GM12878 (cell line): ENCODE measurements at regions of chr14 and their contacts with region 1.

Region 1: DNA sequence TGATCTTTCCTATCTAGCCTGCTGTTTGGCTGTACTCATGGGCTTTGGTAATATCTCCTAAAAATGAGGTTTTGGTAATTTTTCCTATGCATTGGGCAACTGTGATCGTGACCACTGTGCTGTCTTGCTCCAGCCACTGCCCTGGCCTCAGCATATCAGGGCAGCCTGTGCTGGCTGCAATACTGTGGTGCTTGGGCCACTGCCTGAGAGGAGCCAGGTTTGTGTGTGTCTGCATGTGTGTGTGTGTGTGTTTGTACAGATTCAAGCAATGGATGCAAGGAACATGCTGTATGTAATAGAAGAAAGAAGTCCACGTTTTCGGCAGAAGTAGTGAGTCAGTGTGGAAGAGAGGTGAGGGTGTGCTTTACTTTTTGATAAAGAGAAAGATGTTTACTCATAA is 13.0 kb downstream of the ERG28 start:
- DNase-seq: no peak
- ATAC-seq: no peak
- H3K4me3 ChIP-seq: no peak overlapping the region
- H3K27ac ChIP-seq: no peak overlapping the region
- H3K4me1 ChIP-seq: no peaks in the 10 kb centered on the region
- H3K27me3 ChIP-seq: no peaks in the 10 kb centered on the region
- CTCF ChIP-seq: no peak
- EP300 ChIP-seq: no peak
- POLR2A ChIP-seq: no peak
- RAD21 ChIP-seq: no peak

Region 2: DNA sequence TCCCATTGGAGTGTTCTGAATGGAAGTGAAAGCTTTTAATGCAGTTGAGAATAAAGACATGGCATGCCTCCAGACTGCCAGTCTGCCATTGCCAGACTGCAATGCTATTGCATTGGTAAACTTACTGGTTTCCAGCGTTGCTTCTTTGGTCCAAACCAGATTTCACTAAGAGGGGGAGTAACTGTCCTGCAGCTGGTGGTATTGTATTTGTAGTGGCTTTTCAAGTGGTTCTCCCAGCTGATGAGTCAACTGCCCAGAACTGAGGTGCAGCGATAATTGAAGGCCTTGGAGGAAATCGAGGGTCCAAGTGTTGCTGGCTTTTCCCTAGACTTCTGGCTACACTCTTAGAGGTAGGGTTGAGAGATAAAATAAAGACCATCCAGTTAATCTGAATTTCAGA is 18.8 kb before region 1 on chr14:
- CTCF ChIA-PET with region 1: interaction called, 7 read pairs
- POLR2A ChIA-PET with region 1: no interaction called
- RAD21 ChIA-PET with region 1: no interaction called
- SMC1A ChIA-PET with region 1: interaction called, 13 read pairs
- in situ Hi-C with region 1: no loop called
- intact Hi-C with region 1: no loop called
- DNase-seq: no peak
- ATAC-seq: no peak
- H3K4me3 ChIP-seq: no peak overlapping the region
- H3K27ac ChIP-seq: no peak overlapping the region
- H3K4me1 ChIP-seq: no peaks in the 10 kb centered on the region
- H3K27me3 ChIP-seq: no peaks in the 10 kb centered on the region
- CTCF ChIP-seq: no peak
- EP300 ChIP-seq: no peak
- POLR2A ChIP-seq: no peak
- RAD21 ChIP-seq: no peak

Region 3: GRCh38 chr14:75660630-75661494 is 13.2 kb after region 1 on chr14 and contains the starts of genes ERG28 and TTLL5:
- CTCF ChIA-PET with region 1: interaction called, 8 read pairs
- POLR2A ChIA-PET with region 1: interaction called, 15 read pairs
- RAD21 ChIA-PET with region 1: no interaction called
- SMC1A ChIA-PET with region 1: interaction called, 10 read pairs
- in situ Hi-C with region 1: no loop called
- intact Hi-C with region 1: no loop called
- DNase-seq: peak; percentile 99
- ATAC-seq: peak; percentile 99
- H3K4me3 ChIP-seq: peak within 1 kb of the TSS; percentile 89
- H3K27ac ChIP-seq: peak within 1 kb of the TSS; percentile 49
- H3K4me1 ChIP-seq: no peaks in the 10 kb centered on the region
- H3K27me3 ChIP-seq: no peaks in the 10 kb centered on the region
- CTCF ChIP-seq: no peak
- EP300 ChIP-seq: 0 out of 4 replicates have a peak, but pooled peaks of 1 of the 2 experiments have one; percentile 16
- POLR2A ChIP-seq: peak; percentile 82
- RAD21 ChIP-seq: no peak
- polyA plus RNA-seq, gene ERG28: 52.6 to 67.0 TPM
- polyA plus RNA-seq, gene TTLL5: 3.2 to 5.2 TPM

Region 4: GRCh38 chr14:76133083-76133498 is 485.4 kb after region 1 on chr14:
- CTCF ChIA-PET with region 1: no interaction called
- POLR2A ChIA-PET with region 1: no interaction called
- RAD21 ChIA-PET with region 1: no interaction called
- SMC1A ChIA-PET with region 1: no interaction called
- in situ Hi-C with region 1: no loop called
- intact Hi-C with region 1: no loop called
- DNase-seq: no peak
- ATAC-seq: no peak
- H3K4me3 ChIP-seq: no peak overlapping the region
- H3K27ac ChIP-seq: no peak overlapping the region
- H3K4me1 ChIP-seq: no peaks in the 10 kb centered on the region
- H3K27me3 ChIP-seq: peaks cover 2 to 6% of the 10 kb centered on the region in 2 experiments
- CTCF ChIP-seq: no peak
- EP300 ChIP-seq: no peak
- POLR2A ChIP-seq: no peak
- RAD21 ChIP-seq: no peak